BJ (cell line): ENCODE measurements at regions of chr3 and their contacts with region 1.

Region 1: GRCh38 chr3:72847751-72848702 is at the start of gene SHQ1:
- DNase-seq: peak; percentile 70
- H3K4me3 ChIP-seq: peak within 1 kb of the TSS; percentile 63
- H3K27me3 ChIP-seq: no peaks in the 10 kb centered on the region
- CTCF ChIP-seq: no peak
- polyA plus RNA-seq, gene SHQ1: 9.5 and 14.3 TPM in 2 replicates

Region 2: DNA sequence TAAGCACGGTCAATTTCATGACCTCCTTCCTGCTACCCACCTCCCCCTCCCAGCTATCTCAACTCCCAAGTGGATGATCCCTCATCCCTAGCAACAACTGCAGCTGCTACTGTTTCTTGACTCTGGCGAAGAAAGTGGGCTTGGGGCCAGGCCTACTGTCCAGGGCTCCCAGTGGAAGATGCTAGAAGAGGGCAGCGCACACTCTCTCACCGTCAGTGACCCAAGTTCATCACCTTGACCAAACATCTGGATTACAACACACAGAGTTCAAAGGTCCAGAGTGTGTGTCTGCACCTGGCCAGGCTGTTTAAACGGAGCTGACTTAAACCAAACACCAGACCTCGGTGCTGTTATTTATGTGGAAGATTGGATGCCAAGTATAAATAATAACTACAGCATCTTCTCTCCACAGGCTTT is 385.4 kb before region 1 on chr3:
- CTCF ChIA-PET with region 1: no interaction called
- POLR2A ChIA-PET with region 1: no interaction called
- DNase-seq: no peak
- H3K4me3 ChIP-seq: no peak overlapping the region
- H3K27me3 ChIP-seq: peaks cover 22% of the 10 kb centered on the region
- CTCF ChIP-seq: no peak

Region 3: DNA sequence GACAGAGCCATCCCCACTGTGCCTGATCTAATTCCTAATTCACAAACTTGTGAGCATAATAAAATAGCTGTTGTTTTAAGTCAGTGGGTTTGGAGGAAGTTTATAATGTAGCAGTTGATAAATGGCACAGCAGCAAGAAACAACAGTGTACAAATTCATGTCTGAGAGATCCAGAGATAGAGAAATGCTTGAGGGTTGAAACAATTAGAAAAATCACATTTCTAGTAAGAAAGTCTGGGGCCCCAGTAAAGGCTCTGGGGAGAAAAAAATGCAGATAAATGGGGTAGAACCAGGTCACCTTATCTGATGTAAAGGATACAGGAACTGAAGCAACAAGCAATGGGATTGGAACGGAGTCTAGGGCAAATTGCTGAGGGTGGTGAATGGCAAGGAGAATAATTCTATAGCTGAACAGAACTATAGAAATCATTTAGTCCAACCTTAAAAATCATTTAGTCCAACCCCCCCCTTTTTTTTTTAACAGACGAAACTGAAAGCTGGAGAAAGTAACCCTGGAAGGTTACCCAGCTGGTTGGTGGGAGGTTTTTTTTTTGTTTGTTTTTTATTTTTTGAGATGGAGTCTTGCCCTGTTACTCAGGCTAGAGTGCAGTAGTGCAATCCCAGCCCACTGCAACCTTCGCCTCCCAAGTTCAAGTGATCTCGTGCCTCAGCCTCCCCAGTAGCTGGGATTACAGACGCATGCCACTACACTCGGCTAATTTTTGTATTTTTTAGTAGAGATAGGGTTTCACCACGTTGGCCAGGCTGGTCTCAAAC is 14.5 kb after region 1 on chr3:
- CTCF ChIA-PET with region 1: interaction called, 14 read pairs
- POLR2A ChIA-PET with region 1: no interaction called
- DNase-seq: no peak
- H3K4me3 ChIP-seq: no peak overlapping the region
- H3K27me3 ChIP-seq: peaks cover 3% of the 10 kb centered on the region; the same call in 1 of the 2 replicates
- CTCF ChIP-seq: no peak

Region 4: DNA sequence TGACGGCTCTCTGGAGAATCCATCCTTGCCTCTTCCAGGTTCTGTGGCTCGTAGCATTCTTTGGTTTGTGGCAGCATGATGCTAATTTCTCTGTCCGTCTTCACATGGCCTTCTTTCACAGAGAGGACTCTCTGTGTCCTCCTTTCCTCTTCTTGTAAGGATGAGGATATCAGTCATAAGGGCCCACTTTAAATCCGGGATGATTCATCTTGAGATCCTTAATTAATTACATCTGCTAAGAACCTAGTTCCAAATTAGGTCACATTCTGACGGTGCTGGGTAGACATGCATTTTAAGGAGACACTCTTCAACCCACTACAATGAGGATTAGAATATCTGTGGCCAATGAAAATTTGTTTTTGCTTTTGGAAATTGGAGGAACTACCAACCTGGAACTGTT is 24.2 kb after region 1 on chr3:
- CTCF ChIA-PET with region 1: interaction called, 12 read pairs
- POLR2A ChIA-PET with region 1: no interaction called
- DNase-seq: peak; percentile 84
- H3K4me3 ChIP-seq: no peak overlapping the region
- H3K27me3 ChIP-seq: no peaks in the 10 kb centered on the region; the same call in 1 of the 2 replicates
- CTCF ChIP-seq: no peak

Region 5: GRCh38 chr3:73056014-73056844 is 208.2 kb after region 1 on chr3:
- CTCF ChIA-PET with region 1: interaction called, 20 read pairs
- POLR2A ChIA-PET with region 1: no interaction called
- DNase-seq: no peak
- H3K4me3 ChIP-seq: no peak overlapping the region
- H3K27me3 ChIP-seq: no peaks in the 10 kb centered on the region
- CTCF ChIP-seq: peak; percentile 45

Region 6: GRCh38 chr3:73086071-73086494 is 238.1 kb after region 1 on chr3:
- CTCF ChIA-PET with region 1: interaction called, 35 read pairs
- POLR2A ChIA-PET with region 1: no interaction called
- DNase-seq: no peak
- H3K4me3 ChIP-seq: no peak overlapping the region
- H3K27me3 ChIP-seq: no peaks in the 10 kb centered on the region
- CTCF ChIP-seq: peak; percentile 70